Posterior vena cava (tissue), 2 donors: ENCODE measurements at regions of chr1 and their contacts with region 1.

Region 1: GRCh38 chr1:8409106-8409505 is 91.2 kb downstream of the SLC45A1 start:
- DNase-seq: no peak

Region 2: GRCh38 chr1:8374812-8375211 is 34.3 kb before region 1 on chr1:
- intact Hi-C with region 1: loop called in 1 of 2 experiments (anchors 5 kb)
- DNase-seq: no peak